ENCODE measurements at regions of chr15 and their contacts with region 1.

Region 1: DNA sequence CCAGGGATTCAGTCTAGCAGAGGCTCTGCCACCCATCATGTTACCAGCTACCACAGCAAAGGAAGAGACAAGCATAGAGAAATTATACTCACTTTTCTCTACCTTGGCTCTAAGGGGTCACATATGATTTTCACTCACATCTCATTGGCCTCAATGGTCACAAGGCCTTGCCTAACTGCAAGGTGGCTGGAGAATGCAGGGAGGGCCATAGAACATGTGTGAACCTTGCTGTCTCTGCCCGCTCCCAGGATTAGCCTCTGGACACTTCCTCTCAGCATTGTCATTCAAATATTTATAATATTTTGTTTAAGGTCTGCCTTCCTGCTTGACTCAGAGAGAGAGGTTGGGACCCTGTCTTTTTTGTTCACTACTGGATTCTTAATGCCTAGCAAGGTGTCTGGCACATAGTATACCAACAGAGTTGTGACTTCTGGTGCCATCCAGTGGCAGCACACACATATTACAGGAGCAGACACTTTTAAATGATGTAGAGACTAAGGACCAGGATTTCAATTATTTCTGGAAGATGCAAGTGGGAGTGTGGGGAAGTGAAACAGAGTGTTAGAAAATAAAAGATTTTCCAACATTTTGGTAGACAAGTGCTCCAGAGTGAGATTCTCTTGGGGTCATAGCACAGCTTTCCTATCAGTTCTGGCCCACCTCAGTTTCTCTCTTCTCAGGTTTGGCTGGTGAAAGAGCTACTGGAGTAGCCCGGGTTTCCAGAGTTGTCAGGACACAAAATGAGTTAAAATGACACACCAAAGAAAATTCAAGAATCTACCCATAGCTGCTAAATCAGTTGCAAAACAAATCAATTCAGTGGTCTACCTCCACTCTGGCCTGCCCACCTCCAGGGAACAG is 119.0 kb upstream of the RASGRP1 start:
- DNase-seq: peak; percentile 85
- ATAC-seq: peak; percentile 56
- H3K4me3 Mint-ChIP-seq: peak overlapping the region; percentile 64
- H3K27ac Mint-ChIP-seq: peak overlapping the region; percentile 92
- H3K4me1 Mint-ChIP-seq: peaks cover 71% of the 10 kb centered on the region
- H3K27me3 Mint-ChIP-seq: no peaks in the 10 kb centered on the region

Region 2: DNA sequence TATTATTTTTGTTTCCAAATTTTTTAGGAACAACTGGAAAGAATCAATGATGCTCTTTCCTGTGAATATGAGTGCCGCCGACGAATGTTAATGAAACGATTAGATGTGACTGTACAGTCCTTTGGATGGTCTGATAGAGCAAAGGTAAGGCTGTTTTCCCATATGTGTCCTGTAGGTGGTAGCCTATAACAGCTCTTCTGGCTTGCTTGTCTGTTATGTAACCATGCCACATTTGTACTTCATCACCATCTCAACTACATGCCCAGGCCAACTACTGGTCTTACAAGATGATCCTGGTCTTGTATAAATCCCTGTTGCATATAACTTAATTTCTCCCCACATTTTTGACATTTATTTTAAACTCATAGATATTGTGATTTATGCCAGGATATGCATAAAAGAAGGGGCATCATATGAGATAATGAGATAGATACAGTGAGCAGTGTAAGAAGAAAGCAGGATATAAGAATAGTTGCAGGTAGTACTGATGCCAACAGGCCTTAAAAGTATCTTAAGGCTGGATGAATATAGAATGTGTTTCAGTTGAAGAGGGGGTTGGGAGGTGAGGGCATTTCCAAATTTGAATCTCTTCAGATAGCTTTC is 209.4 kb before region 1 on chr15:
- CTCF ChIA-PET with region 1: interaction called, 81 read pairs
- POLR2A ChIA-PET with region 1: no interaction called
- DNase-seq: peak; percentile 58
- ATAC-seq: peak; percentile 95
- H3K4me3 Mint-ChIP-seq: no peak overlapping the region
- H3K27ac Mint-ChIP-seq: peak overlapping the region; percentile 7
- H3K4me1 Mint-ChIP-seq: peaks cover 2% of the 10 kb centered on the region
- H3K27me3 Mint-ChIP-seq: no peaks in the 10 kb centered on the region

Region 3: DNA sequence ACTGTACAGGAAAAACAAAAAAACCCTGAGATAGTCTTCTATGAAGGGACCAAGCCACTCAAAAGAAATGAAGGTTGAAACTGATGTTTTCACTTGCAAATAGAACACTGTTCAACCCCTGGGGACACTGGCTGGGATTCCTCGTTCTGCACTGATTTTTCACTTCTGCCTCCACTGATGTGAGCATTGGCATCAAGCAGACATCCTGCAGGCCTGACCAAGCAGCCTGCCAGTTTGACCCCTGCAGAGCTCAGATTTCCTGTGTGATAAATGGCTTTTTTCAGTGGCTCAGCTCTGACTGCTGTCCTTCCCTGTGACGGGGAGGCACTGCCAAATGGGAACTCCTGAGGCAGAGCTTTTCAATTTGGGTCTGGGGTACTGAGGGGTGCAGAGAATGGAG is 169.0 kb before region 1 on chr15:
- CTCF ChIA-PET with region 1: interaction called, 56 read pairs
- POLR2A ChIA-PET with region 1: interaction called, 3 read pairs
- DNase-seq: no peak
- ATAC-seq: no peak
- H3K4me3 Mint-ChIP-seq: no peak overlapping the region
- H3K27ac Mint-ChIP-seq: peak overlapping the region; percentile 72
- H3K4me1 Mint-ChIP-seq: peaks cover 20% of the 10 kb centered on the region
- H3K27me3 Mint-ChIP-seq: no peaks in the 10 kb centered on the region

Region 4: GRCh38 chr15:38554354-38554753 is 129.3 kb before region 1 on chr15:
- CTCF ChIA-PET with region 1: interaction called, 572 read pairs
- POLR2A ChIA-PET with region 1: interaction called, 336 read pairs
- DNase-seq: no peak
- ATAC-seq: peak; percentile 49
- H3K4me3 Mint-ChIP-seq: peak overlapping the region; percentile 4
- H3K27ac Mint-ChIP-seq: peak overlapping the region; percentile 44
- H3K4me1 Mint-ChIP-seq: peaks cover 83% of the 10 kb centered on the region
- H3K27me3 Mint-ChIP-seq: no peaks in the 10 kb centered on the region

Region 5: DNA sequence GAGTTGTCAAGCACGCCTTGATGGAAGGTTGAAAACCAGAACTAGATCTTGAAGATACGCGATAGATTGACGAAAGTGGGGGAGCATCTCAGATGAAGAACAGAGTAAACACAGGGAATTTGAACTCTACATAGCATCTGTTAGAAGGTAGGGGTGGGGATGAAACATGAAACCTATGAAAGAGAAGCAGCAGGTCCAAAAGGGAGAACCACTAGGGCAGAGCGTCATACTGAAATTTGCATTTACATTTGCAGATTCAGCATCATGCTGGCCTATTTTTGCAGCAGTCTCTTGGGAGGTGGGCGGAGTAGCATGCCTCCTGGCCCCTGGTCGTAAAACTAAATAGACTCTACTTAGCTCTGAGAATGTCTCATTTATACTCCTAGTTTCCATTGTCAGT is 72.9 kb before region 1 on chr15:
- CTCF ChIA-PET with region 1: interaction called, 38 read pairs
- POLR2A ChIA-PET with region 1: interaction called, 12 read pairs
- DNase-seq: peak; percentile 68
- ATAC-seq: peak; percentile 60
- H3K4me3 Mint-ChIP-seq: peak overlapping the region; percentile 71
- H3K27ac Mint-ChIP-seq: peak overlapping the region; percentile 98
- H3K4me1 Mint-ChIP-seq: peaks cover 73% of the 10 kb centered on the region
- H3K27me3 Mint-ChIP-seq: no peaks in the 10 kb centered on the region

Region 6: DNA sequence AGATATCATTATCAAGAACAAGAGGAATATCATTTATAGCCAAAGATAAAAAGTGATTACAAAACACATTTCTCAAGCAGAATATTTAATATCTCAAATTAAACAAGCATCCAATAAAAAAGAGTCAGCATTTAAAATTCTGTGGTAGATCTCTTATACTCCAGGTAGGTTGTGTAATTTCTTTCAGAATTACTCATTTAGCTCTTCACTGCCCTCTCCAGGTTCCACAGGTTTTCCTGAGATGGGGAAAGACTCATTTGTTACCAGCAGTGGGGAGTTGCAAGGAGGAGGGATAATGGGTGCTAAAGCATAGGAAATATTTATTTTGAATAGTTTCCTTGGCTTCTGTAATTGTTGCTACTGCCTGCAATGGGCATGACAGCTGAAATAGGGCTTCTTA is 35.9 kb before region 1 on chr15:
- CTCF ChIA-PET with region 1: interaction called, 803 read pairs
- POLR2A ChIA-PET with region 1: interaction called, 115 read pairs
- DNase-seq: no peak
- ATAC-seq: no peak
- H3K4me3 Mint-ChIP-seq: no peak overlapping the region
- H3K27ac Mint-ChIP-seq: no peak overlapping the region
- H3K4me1 Mint-ChIP-seq: peaks cover 78% of the 10 kb centered on the region
- H3K27me3 Mint-ChIP-seq: no peaks in the 10 kb centered on the region

Measured in activated CD8-positive, alpha-beta T cell treated with anti-CD3 and anti-CD28 coated beads, Interleukin-2, amount 10 ng/mL, durations not matched to agents 7 days and 5 days (primary cell).